ENCODE measurements at regions of chr7 and their contacts with region 1.

Region 1: GRCh38 chr7:148185041-148185440 is 405.5 kb upstream of the C7orf33 start:
- DNase-seq: no peak
- H3K4me3 ChIP-seq: no peak overlapping the region
- H3K27ac ChIP-seq: no peak overlapping the region
- H3K4me1 ChIP-seq: no peaks in the 10 kb centered on the region
- H3K27me3 ChIP-seq: no peaks in the 10 kb centered on the region
- CTCF ChIP-seq: no peak
- EP300 ChIP-seq: no peak
- POLR2A ChIP-seq: no peak

Region 2: DNA sequence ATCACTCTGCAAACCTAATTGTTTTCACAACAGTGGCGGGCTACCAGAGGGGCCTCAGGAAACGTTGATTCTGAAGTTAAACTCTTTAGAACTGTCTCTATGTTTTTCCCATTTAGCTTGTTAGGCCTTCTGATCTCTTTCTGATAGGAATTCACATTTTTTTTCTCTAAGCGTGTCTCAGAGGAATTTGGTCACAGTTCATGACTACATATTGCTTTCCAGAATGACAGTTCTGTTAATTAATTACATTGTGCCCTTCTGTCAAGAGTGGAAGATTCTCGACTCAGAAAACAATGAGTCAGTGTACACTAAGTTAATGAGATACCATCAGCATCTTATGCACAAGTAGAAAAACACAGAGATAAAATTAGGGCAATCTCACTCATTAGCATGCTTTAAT is 63.6 kb before region 1 on chr7:
- in situ Hi-C with region 1: no loop called
- intact Hi-C with region 1: loop called (anchors 10 kb)
- DNase-seq: no peak
- H3K4me3 ChIP-seq: no peak overlapping the region
- H3K27ac ChIP-seq: no peak overlapping the region
- H3K4me1 ChIP-seq: no peaks in the 10 kb centered on the region
- H3K27me3 ChIP-seq: no peaks in the 10 kb centered on the region
- CTCF ChIP-seq: no peak
- EP300 ChIP-seq: no peak
- POLR2A ChIP-seq: no peak

Measured in transverse colon (tissue), 4 donors.